Caco-2 (cell line): ENCODE measurements at regions of chr19 and their contacts with region 1.

Region 1: GRCh38 chr19:1415759-1416263 is 8.4 kb downstream of the DAZAP1 start:
- DNase-seq: no peak
- H3K4me3 ChIP-seq: no peak overlapping the region
- H3K4me3 Mint-ChIP-seq: no peak overlapping the region
- H3K27ac Mint-ChIP-seq: peak overlapping the region; percentile 86
- H3K4me1 ChIP-seq: peaks cover 18% of the 10 kb centered on the region
- H3K4me1 Mint-ChIP-seq: peaks cover 8% of the 10 kb centered on the region
- H3K27me3 ChIP-seq: no peaks in the 10 kb centered on the region
- H3K27me3 Mint-ChIP-seq: no peaks in the 10 kb centered on the region
- CTCF ChIP-seq: no peak

Region 2: GRCh38 chr19:1400281-1401137 is 15.3 kb before region 1 on chr19:
- CTCF ChIA-PET with region 1: no interaction called
- POLR2A ChIA-PET with region 1: no interaction called
- intact Hi-C with region 1: loop called (anchors 1 kb)
- DNase-seq: peak; percentile 64 to 66
- H3K4me3 ChIP-seq: peak overlapping the region; percentile 54
- H3K4me3 Mint-ChIP-seq: peak overlapping the region; percentile 73
- H3K27ac Mint-ChIP-seq: peak overlapping the region; percentile 29
- H3K4me1 ChIP-seq: peaks cover 9% of the 10 kb centered on the region
- H3K4me1 Mint-ChIP-seq: no peaks in the 10 kb centered on the region
- H3K27me3 ChIP-seq: no peaks in the 10 kb centered on the region
- H3K27me3 Mint-ChIP-seq: no peaks in the 10 kb centered on the region
- CTCF ChIP-seq: no peak